H1 (cell line): ENCODE measurements at regions of chr12 and their contacts with region 1.

Region 1: GRCh38 chr12:54032627-54033100 is at the start of gene HOXC5:
- DNase-seq: peak; percentile 68 to 93
- H3K4me3 ChIP-seq: peak within 1 kb of the TSS in 1 of 4 experiments; percentile 9; a peak in 2 of 8 replicates
- H3K27ac ChIP-seq: no peak within 1 kb of the TSS
- H3K4me1 ChIP-seq: peaks cover 0 to 9% (median 2%) of the 10 kb centered on the region in 4 experiments; a peak in 5 of 7 replicates
- H3K27me3 ChIP-seq: peaks cover 94 to 100% (median 98%) of the 10 kb centered on the region in 4 experiments
- CTCF ChIP-seq: peak; percentile 85 to 93 (median 90)
- EP300 ChIP-seq: no peak
- POLR2A ChIP-seq: no peak
- RAD21 ChIP-seq: peak; percentile 96 to 97
- total RNA-seq, gene HOXC5: not detected in 2 replicates

Region 2: DNA sequence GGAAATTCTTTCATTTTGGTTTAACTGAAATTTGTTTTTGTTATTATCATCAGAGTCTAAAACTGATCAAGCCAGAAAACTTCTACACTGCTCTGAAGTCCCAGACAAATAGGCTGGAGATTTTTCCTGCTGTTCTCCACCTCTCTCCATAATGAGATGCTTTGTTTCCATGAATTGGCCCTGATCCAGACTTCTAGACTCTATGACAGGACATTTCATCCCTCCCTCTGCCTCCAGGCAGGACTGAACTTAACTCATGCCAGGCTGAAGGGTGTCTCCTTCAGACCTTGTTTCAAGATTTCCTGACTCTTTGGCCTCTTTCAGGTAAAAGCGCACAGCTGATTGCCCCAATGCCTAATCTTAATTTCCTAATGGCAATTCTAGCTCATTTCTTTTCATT is 163.2 kb before region 1 on chr12:
- CTCF ChIA-PET with region 1: no interaction called
- POLR2A ChIA-PET with region 1: no interaction called
- DNase-seq: no peak
- H3K4me3 ChIP-seq: no peak overlapping the region
- H3K27ac ChIP-seq: no peak overlapping the region
- H3K4me1 ChIP-seq: 0 out of 7 replicates have a peak, but pooled peaks cover 0 to 1% (median 0%) of the 10 kb centered on the region in 4 experiments
- H3K27me3 ChIP-seq: peaks cover 0 to 1% (median 0%) of the 10 kb centered on the region in 4 experiments; a peak in 4 of 7 replicates
- CTCF ChIP-seq: no peak
- EP300 ChIP-seq: no peak
- POLR2A ChIP-seq: no peak
- RAD21 ChIP-seq: no peak

Region 3: DNA sequence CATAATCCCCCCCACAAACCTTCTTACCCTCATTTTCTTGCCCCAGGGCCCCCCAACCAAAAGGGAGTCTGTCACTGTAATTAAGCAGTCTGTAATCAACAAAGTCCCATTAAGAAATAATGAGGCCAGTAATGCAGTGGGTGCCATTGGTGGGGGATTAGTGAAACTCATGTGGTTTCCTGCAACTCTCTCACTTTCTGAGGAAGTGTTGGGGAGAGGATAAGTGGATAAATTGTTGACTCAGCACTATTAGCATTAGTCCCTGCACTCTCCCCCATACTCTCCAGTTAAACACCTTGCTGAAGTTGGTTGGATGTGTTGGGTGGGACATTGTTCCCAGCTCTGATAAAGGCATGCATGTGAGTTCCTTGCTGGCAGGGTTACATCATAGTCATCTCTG is 139.9 kb before region 1 on chr12:
- CTCF ChIA-PET with region 1: no interaction called
- POLR2A ChIA-PET with region 1: no interaction called
- DNase-seq: no peak
- H3K4me3 ChIP-seq: no peak overlapping the region
- H3K27ac ChIP-seq: no peak overlapping the region
- H3K4me1 ChIP-seq: no peaks in the 10 kb centered on the region
- H3K27me3 ChIP-seq: peaks cover 0 to 1% (median 0%) of the 10 kb centered on the region in 4 experiments; a peak in 5 of 7 replicates
- CTCF ChIP-seq: no peak
- EP300 ChIP-seq: no peak
- POLR2A ChIP-seq: no peak
- RAD21 ChIP-seq: no peak

Region 4: GRCh38 chr12:54005853-54006686 is 26.6 kb before region 1 on chr12:
- CTCF ChIA-PET with region 1: interaction called, 172 read pairs
- POLR2A ChIA-PET with region 1: interaction called, 3 read pairs
- DNase-seq: peak; percentile 50 to 98
- H3K4me3 ChIP-seq: no peak overlapping the region
- H3K27ac ChIP-seq: no peak overlapping the region
- H3K4me1 ChIP-seq: peaks cover 0 to 4% (median 0%) of the 10 kb centered on the region in 4 experiments; a peak in 2 of 7 replicates
- H3K27me3 ChIP-seq: peaks cover 97 to 100% (median 100%) of the 10 kb centered on the region in 4 experiments
- CTCF ChIP-seq: peak; percentile 88 to 97 (median 89)
- EP300 ChIP-seq: no peak
- POLR2A ChIP-seq: no peak
- RAD21 ChIP-seq: peak; percentile 98

Region 5: DNA sequence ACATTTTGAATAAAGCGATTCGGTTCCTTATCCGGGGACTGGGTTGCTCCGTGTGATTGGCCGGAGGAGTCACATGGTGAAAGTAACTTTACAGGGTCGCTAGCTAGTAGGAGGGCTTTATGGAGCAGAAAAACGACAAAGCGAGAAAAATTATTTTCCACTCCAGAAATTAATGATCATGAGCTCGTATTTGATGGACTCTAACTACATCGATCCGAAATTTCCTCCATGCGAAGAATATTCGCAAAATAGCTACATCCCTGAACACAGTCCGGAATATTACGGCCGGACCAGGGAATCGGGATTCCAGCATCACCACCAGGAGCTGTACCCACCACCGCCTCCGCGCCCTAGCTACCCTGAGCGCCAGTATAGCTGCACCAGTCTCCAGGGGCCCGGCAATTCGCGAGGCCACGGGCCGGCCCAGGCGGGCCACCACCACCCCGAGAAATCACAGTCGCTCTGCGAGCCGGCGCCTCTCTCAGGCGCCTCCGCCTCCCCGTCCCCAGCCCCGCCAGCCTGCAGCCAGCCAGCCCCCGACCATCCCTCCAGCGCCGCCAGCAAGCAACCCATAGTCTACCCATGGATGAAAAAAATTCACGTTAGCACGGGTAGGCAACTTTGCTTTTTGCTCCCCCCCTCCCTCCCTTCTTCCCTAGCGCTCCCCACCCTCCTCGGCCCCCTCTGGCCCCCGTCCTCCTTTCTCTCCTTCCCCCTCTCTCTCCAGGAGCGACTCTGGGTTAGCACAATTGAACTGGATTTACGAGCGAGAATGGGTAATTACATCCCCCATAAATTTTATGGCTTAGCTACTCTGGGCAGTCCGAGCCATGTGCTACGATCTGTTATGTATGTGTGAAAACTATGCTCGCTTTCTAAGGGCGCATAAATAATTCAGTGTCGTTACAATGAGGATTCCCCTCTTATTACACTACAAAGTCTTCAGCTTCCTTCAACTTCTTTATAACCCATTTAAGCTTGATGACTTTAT is 21.4 kb after region 1 on chr12 and contains the start of gene HOXC4:
- CTCF ChIA-PET with region 1: interaction called, 34 read pairs
- POLR2A ChIA-PET with region 1: interaction called, 3 read pairs
- DNase-seq: no peak
- H3K4me3 ChIP-seq: peak within 1 kb of the TSS in 1 of 4 experiments; percentile 51; a peak in 5 of 8 replicates
- H3K27ac ChIP-seq: no peak within 1 kb of the TSS
- H3K4me1 ChIP-seq: peaks cover 3 to 22% (median 8%) of the 10 kb centered on the region in 4 experiments; a peak in 6 of 7 replicates
- H3K27me3 ChIP-seq: peaks cover 95 to 100% (median 99%) of the 10 kb centered on the region in 4 experiments
- CTCF ChIP-seq: no peak
- EP300 ChIP-seq: no peak
- POLR2A ChIP-seq: no peak
- RAD21 ChIP-seq: no peak
- total RNA-seq, gene HOXC4: not detected in 2 replicates

Region 6: GRCh38 chr12:54134850-54135249 is 102.2 kb after region 1 on chr12:
- CTCF ChIA-PET with region 1: interaction called, 45 read pairs
- POLR2A ChIA-PET with region 1: no interaction called
- DNase-seq: no peak
- H3K4me3 ChIP-seq: no peak overlapping the region
- H3K27ac ChIP-seq: no peak overlapping the region
- H3K4me1 ChIP-seq: peaks cover 0 to 3% (median 1%) of the 10 kb centered on the region in 4 experiments; a peak in 2 of 7 replicates
- H3K27me3 ChIP-seq: peaks cover 25 to 89% (median 67%) of the 10 kb centered on the region in 4 experiments
- CTCF ChIP-seq: peak in 1 of 3 experiments; percentile 37; a peak in 1 of 4 replicates
- EP300 ChIP-seq: no peak
- POLR2A ChIP-seq: no peak
- RAD21 ChIP-seq: peak; percentile 31 to 50; a peak in 2 of 4 replicates

Region 7: DNA sequence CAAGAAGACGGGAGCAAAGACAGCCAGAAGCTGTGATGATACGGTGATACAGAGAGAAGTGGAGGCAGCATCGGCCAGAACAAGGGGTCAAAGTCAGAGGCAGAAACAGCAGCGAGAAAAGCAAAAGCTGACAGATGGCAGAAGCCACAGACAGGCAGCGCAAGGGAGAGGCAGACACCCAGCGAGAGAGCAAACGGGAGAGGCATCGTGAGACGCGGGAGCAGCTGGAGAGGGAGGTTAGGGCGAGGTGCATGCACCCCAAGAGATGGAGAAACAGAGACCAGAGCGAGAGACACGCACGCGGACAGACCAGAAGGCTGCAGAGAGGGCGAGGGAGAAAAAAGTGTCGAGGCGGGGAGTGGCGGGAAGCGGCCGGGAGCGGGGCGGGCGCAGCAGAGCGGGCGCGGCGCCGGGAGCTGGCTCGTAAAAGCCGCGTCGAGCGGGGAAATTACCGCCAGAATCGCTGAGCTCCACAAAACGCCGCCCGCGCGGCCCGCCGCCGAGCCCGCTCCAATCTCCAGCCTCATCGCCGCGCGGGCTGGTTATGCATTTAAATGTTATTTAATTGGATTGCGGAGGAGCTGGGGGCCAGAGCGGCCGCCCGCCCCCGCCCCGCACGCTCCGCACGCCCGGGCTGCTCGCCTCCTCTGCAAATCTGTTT is 140.5 kb after region 1 on chr12:
- CTCF ChIA-PET with region 1: interaction called, 13 read pairs
- POLR2A ChIA-PET with region 1: no interaction called
- DNase-seq: peak in 1 of 2 experiments; percentile 66
- H3K4me3 ChIP-seq: peak overlapping the region; percentile 34 to 58 (median 42); a peak in 5 of 8 replicates
- H3K27ac ChIP-seq: no peak overlapping the region
- H3K4me1 ChIP-seq: peaks cover 0 to 8% (median 3%) of the 10 kb centered on the region in 4 experiments; a peak in 4 of 7 replicates
- H3K27me3 ChIP-seq: peaks cover 42 to 57% (median 51%) of the 10 kb centered on the region in 4 experiments
- CTCF ChIP-seq: no peak
- EP300 ChIP-seq: no peak
- POLR2A ChIP-seq: no peak
- RAD21 ChIP-seq: no peak